Right ventricle myocardium inferior (tissue), 1 donor: ENCODE measurements at regions of chr4 and their contacts with region 1.

Region 1: GRCh38 chr4:153318696-153319320 is 25.7 kb upstream of the MND1 start:
- DNase-seq: no peak
- ATAC-seq: no peak

Region 2: GRCh38 chr4:153083447-153083947 is 235.3 kb before region 1 on chr4:
- intact Hi-C with region 1: no loop called
- DNase-seq: no peak
- ATAC-seq: peak; percentile 68

Region 3: GRCh38 chr4:153142700-153143438 is 175.9 kb before region 1 on chr4:
- intact Hi-C with region 1: loop called (anchors 2 kb)
- DNase-seq: peak; percentile 73
- ATAC-seq: peak; percentile 73

Region 4: GRCh38 chr4:153204247-153205027 is 114.4 kb before region 1 on chr4 and contains the start of gene TRIM2:
- intact Hi-C with region 1: loop called (anchors 5 kb)
- DNase-seq: peak; percentile 83
- ATAC-seq: peak; percentile 91
- total RNA-seq, gene TRIM2: 14.7 TPM

Region 5: GRCh38 chr4:153232768-153233167 is 86.0 kb before region 1 on chr4:
- intact Hi-C with region 1: loop called (anchors 5 kb)
- DNase-seq: no peak
- ATAC-seq: peak; percentile 90